Dendritic cell treated with granulocyte-macrophage colony-stimulating factor and Interleukin-4, amounts not matched to agents 40 ng/mL and 50 ng/mL, for 4 days (primary cell): ENCODE measurements at regions of chr5 and their contacts with region 1.

Region 1: GRCh38 chr5:159515909-159516415 is 185.7 kb upstream of the IL12B start:
- H3K4me3 Mint-ChIP-seq: no peak overlapping the region
- H3K27ac Mint-ChIP-seq: no peak overlapping the region
- H3K4me1 Mint-ChIP-seq: no peaks in the 10 kb centered on the region
- H3K27me3 Mint-ChIP-seq: peaks cover 8% of the 10 kb centered on the region

Region 2: DNA sequence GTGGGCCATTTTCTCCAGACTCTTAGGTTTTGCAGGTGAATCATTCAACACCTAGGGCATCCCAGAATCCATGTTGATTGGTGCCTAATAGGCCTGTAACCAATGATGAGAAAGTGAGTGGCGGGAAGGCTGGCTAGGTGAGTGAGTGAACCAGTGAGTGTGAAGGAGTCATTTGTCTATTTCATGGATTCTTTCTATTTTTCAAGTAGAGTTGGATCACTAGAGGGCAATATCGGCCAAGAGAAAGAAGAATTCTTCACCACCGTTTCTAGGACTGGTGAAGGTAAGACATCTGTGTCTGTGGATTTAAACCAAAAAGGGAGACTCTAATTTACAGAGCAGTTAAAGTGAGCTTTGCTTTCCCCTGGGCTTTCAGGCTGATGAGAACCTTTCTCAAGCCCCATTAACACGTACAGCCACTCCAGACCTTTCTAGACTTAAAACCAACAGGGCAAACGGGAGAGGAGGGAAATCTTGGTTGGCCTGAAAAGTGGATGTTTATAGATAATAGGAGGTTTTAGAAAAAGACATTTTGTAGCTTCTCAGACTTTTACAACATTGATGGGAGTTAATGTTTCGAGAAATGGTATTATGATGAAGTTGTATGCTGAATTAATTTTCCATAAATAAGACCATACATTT is 71.4 kb before region 1 on chr5:
- intact Hi-C with region 1: loop called (anchors 2 kb)
- H3K4me3 Mint-ChIP-seq: no peak overlapping the region
- H3K27ac Mint-ChIP-seq: no peak overlapping the region
- H3K4me1 Mint-ChIP-seq: no peaks in the 10 kb centered on the region
- H3K27me3 Mint-ChIP-seq: peaks cover 2% of the 10 kb centered on the region